ENCODE measurements at regions of chr1 and their contacts with region 1.

Region 1: DNA sequence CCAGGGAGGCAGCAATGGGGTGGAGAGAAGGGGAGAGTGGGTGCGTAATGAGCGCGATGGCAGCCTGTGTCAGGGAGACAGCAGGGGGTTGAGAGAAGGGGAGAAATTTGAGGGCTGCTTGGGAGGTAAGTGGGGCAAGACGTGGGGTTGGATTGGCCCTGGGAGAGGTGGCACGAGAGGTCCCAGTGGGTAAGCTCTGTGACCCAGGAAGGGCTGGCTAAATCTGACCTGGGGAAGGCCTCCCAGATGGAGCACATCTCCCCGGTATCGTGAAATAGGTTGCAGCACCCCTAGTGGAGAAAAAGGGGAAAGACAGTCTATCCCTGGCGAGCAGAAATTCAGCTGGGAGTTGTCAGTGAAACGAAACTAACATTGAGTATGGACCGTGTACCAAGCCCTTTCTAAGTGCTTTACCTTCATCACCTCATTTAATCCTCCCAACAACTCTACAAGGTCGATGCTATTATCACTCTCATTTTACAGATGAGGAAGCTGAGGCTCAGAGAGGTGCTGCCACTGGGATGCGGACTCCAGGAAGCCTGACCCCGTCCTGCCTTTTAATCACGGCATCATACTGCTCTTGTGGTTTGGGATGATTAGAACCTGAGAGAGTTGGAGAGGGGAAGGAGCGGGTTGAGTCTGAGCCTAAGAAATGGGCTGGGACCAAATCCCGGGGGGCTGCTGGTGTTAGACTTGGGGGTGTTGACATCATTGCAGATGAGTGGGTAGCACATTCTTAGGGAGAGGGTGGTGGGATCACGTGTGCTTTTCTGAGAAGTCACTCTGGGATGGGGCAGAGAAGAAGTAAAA is 56.6 kb upstream of the RPL11 start:
- DNase-seq: peak in 4 of 5 donors; percentile 51 to 62 (median 62)
- ATAC-seq: peak; percentile 40 to 72 (median 65)
- H3K4me3 ChIP-seq: peak overlapping the region in 11 of 12 donors; percentile 2 to 61 (median 52)
- H3K27ac ChIP-seq: peak overlapping the region; percentile 57 to 93 (median 82)
- H3K4me1 ChIP-seq: peaks cover 0 to 43% (median 13%) of the 10 kb centered on the region in 12 donors
- H3K27me3 ChIP-seq: no peaks in the 10 kb centered on the region
- CTCF ChIP-seq: peak; percentile 88 to 97 (median 93)
- POLR2A ChIP-seq: peak in 1 of 2 donors; percentile 13

Region 2: DNA sequence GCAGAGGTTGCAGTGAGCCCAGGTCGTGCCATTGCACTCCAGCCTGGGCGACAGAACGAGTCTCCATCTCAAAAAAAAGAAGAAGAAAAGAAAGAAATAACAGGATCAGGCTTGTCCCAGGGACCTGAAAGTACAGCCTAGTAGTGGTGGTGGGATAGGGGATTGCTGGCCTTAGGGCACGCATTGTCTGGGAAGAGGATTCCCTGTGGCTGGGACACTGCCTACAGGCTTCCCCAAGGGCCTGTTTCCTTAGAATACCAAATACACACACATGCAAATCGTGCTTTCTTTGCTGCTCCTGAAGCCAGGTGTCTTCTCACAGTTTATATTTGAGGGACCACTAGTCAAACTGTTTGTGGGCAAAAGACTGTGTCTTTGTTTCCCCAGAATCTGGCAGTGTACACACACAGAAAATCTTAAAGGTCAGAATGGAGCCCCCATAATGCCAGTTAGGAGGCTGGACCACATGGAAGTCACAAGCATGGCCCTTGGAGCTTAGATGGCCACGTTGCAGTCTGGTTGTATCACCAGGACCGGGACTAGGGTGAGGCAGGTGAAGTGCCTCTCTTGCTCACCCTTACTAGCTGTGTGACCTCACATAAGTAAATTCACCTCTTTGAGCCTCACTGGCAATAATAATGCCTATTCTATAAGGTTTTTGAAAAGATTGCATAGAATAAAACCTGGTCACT is 138.4 kb before region 1 on chr1:
- intact Hi-C with region 1: loop called in 5 of 10 experiments (anchors 5 kb)
- DNase-seq: no peak
- ATAC-seq: peak in 2 of 4 donors; percentile 16 to 34
- H3K4me3 ChIP-seq: no peak overlapping the region
- H3K27ac ChIP-seq: no peak overlapping the region
- H3K4me1 ChIP-seq: peaks cover 0 to 7% (median 0%) of the 10 kb centered on the region in 12 donors
- H3K27me3 ChIP-seq: no peaks in the 10 kb centered on the region
- CTCF ChIP-seq: no peak
- POLR2A ChIP-seq: no peak

Region 3: DNA sequence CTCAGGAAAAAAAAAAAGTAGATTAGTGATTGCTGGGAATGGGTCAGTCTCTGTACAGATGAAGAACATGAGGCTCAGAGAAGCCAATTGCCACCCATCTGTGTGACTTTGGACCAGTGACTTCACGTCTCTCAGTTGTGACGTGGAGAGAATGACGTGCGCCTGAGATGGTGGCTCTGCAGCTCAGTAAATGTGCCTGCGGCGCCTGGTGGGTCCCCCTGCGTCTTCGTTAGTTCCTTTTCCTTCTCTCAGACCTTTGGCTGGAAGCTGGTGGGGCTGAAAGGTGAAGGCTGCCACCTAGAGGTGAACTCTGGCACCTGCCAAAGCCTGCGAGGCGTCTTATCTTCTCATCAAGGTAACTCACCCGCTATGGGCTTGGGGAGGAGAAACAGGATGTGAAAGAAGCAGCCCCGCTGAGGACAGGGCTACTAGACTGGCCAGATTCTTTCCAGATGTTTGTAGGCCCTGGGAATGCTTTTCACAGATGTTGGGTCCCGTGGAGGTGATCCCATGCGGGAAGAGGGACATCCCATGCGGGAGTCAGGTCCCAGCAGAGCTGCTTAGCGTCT is 95.3 kb before region 1 on chr1:
- intact Hi-C with region 1: loop called in 8 of 10 experiments (anchors 1 kb)
- DNase-seq: peak; percentile 79 to 89 (median 82)
- ATAC-seq: peak; percentile 45 to 92 (median 90)
- H3K4me3 ChIP-seq: peak overlapping the region in 5 of 12 donors; percentile 2 to 29 (median 15)
- H3K27ac ChIP-seq: peak overlapping the region in 2 of 12 donors; percentile 3 to 21
- H3K4me1 ChIP-seq: peaks cover 0 to 13% (median 9%) of the 10 kb centered on the region in 12 donors
- H3K27me3 ChIP-seq: no peaks in the 10 kb centered on the region
- CTCF ChIP-seq: peak; percentile 89 to 96 (median 92)
- POLR2A ChIP-seq: no peak

Region 4: DNA sequence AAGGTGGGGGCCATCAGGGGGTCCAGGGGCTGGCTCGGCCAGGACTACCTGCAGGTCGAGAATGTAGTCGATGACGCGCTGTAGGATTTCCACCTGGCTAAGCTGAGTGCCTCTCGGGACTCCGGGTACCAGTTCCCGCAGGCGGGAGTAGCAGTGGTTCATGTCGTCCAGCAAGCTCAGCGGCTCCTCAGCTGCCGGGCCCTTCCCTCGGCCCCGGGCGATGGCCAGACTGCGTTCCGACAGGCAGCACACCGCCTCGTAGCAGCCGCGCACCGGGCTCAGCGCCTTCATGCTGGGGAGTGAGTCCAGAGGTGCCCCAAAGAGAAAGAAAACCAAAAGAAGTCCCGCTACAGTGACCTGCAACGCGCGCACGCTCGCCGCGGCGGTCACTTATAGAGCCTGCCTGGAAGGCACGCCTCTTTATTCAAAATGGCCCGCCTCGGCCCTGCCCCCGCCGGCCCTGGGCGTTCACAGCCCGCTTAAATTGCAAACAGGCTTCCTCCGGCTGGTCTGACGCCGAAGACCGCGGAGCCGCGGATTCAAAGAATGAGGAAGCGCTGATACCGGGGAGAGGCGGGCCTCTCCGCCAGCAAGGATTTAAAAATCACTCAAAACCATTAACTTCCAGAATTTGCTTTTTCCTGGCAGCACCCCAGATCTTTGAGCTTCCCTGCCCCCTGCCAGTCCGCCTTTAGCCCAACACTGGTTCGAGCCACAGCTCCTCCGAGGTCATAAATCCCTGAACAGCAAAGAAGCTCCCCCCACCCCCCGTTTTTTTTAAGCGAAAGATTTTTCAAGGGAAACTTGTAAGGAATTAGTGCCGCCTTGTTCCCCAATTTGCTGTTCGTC is 75.7 kb before region 1 on chr1 and contains the start of gene ID3:
- intact Hi-C with region 1: loop called in 1 of 10 experiments (anchors 5 kb)
- DNase-seq: peak; percentile 97 to 99 (median 98)
- ATAC-seq: peak; percentile 75 to 86 (median 79)
- H3K4me3 ChIP-seq: peak within 1 kb of the TSS; percentile 60 to 92 (median 79)
- H3K27ac ChIP-seq: peak within 1 kb of the TSS; percentile 83 to 97 (median 94)
- H3K4me1 ChIP-seq: peaks cover 4 to 83% (median 59%) of the 10 kb centered on the region in 12 donors
- H3K27me3 ChIP-seq: no peaks in the 10 kb centered on the region
- CTCF ChIP-seq: no peak
- POLR2A ChIP-seq: peak; percentile 88 to 99
- total RNA-seq, gene ID3: 57.5 to 185 (median 91.0) TPM

Region 5: DNA sequence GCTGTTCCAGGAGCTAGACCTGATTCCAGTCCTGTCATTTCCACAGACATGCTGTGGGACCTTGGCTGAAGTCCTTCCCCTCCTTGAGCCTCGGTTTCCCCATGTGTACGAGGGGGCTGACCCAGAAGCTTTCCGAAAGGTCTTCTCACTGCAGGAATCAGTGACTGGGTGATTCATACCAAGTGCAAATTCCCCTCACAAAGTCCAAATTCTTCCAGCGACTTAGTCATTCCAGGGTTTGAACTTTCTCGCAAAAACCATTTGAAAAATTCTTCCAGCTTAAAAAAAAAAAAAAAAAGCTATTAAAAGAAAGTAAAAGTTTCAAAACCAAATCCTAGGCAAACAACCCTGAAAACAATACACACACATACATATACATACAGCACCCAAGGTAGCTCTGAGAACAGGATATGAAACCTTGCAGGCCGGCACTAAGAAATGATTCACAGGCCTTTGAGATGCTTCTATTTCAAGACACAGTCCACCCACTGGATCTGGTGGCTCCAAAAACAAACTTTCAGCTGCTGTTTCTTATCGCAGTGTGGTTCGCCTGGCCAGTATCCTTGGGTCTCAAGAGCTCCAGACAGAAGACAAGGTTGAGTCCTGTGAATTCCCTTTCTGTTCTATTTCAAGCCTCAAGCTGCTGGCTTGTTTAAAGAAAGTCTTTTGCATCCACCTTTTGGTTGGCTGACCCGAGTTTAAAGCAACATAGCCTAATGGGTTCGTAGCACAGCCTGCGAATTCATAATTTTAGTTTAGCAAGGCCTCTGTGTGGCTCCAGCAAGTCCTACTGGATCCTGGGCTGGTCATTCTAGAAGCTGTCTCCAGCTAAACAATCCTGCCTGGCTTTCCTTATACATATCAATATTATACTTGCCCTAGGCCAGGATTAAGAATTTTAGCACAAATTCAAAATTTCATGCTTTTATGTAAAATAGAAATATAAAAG is 57.7 kb before region 1 on chr1:
- intact Hi-C with region 1: loop called in 1 of 10 experiments (anchors 5 kb)
- DNase-seq: peak in 4 of 5 donors; percentile 56 to 71 (median 66)
- ATAC-seq: peak; percentile 52 to 86 (median 82)
- H3K4me3 ChIP-seq: peak overlapping the region in 8 of 12 donors; percentile 5 to 43 (median 26)
- H3K27ac ChIP-seq: peak overlapping the region; percentile 40 to 87 (median 79)
- H3K4me1 ChIP-seq: peaks cover 0 to 53% (median 34%) of the 10 kb centered on the region in 12 donors
- H3K27me3 ChIP-seq: no peaks in the 10 kb centered on the region
- CTCF ChIP-seq: no peak
- POLR2A ChIP-seq: no peak

Region 6: GRCh38 chr1:23591460-23592208 is 43.4 kb before region 1 on chr1:
- intact Hi-C with region 1: loop called in 1 of 10 experiments (anchors 5 kb)
- DNase-seq: peak; percentile 27 to 57 (median 40)
- ATAC-seq: peak; percentile 37 to 90 (median 58)
- H3K4me3 ChIP-seq: no peak overlapping the region
- H3K27ac ChIP-seq: peak overlapping the region in 8 of 12 donors; percentile 11 to 70 (median 50)
- H3K4me1 ChIP-seq: peaks cover 0 to 32% (median 14%) of the 10 kb centered on the region in 12 donors
- H3K27me3 ChIP-seq: no peaks in the 10 kb centered on the region
- CTCF ChIP-seq: no peak
- POLR2A ChIP-seq: no peak

Region 7: DNA sequence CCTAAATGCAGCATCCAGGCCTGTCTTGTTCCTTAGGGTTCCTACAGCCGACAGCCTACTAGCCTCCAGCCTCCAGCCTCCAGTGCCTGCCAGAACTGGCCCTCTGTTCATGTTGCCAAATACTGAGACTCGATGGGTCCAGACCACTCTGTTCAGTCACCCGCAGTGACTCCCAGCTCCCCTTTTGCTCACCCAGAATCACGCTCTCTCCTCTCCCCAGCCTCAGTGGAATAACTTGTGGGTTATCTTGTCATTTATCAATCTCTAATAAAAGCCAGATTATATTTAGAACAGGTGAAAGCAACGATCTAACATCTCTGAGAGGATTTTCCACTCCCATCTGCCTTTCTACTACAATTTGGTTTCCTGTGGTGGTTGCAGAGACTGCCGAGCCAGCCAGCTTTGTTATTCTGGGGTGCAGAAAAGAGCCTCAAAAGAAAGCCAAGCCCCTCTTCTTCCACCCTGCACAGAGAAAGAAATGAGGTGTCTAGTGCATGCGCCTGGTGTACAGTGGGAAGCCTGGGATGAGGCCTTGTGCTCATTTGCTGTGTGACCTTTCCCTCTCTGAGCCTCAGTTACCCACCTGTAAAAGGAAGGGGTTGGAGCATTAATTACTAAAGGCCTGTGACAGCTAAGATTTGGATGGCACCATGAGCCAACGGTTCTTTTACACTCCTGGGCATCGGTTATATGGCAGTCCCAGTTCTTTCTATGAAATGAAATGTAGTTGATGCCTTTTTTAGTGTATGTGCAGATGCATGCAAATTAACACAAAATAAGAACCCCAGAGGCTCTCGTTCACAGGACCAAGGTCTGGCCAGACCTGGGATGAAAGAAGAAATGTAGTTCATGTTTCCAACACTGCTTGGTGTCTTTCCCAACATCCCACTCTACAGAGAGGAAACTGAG is 32.8 kb before region 1 on chr1:
- intact Hi-C with region 1: no loop called
- DNase-seq: peak in 1 of 5 donors; percentile 2
- ATAC-seq: no peak
- H3K4me3 ChIP-seq: no peak overlapping the region
- H3K27ac ChIP-seq: no peak overlapping the region
- H3K4me1 ChIP-seq: peaks cover 0 to 17% (median 12%) of the 10 kb centered on the region in 12 donors
- H3K27me3 ChIP-seq: no peaks in the 10 kb centered on the region
- CTCF ChIP-seq: no peak
- POLR2A ChIP-seq: no peak

Measured in heart left ventricle (tissue), 16 donors.